ENCODE measurements at regions of chr4 and their contacts with region 1.

Region 1: DNA sequence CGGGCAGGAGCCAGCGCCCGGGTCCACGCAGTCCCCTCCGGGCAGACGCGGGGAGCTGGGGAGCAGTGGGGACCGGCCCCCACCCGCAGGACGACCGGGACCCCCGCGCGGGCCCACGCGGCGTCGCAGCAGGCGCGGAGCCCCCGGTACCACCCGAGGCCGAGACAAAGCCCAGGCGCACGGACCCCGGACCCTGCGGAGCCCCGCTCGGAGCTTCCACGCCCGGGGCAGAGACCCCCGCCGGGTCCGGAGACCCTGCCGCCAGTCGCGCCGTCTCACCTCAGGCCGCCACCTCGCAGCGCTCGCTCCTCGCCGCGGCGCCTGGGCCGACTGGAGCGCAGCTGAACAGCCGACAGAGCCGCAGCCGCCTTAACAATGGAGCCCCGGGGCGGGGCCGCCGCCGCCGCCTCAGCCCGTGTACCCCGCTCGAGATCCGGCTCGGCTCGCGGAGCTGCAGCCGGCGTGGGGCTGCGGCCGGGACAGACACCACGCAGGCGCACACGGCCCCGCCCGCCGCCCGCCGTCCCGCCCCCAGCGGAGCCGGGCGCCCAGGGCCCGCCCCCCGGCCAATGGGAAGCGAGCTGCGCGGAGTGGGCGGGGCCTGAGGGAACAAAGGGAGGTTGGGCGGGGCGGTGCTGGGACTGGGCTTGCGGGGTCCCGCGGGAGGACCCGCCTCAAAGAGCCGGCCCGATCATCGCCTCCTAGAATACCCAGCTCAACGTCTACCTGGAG is at the start of gene AFAP1:
- DNase-seq: peak; percentile 86
- ATAC-seq: peak; percentile 97
- H3K4me3 Mint-ChIP-seq: peak within 1 kb of the TSS; percentile 63
- H3K27ac Mint-ChIP-seq: no peak within 1 kb of the TSS
- H3K4me1 Mint-ChIP-seq: peaks cover 20% of the 10 kb centered on the region
- H3K27me3 Mint-ChIP-seq: peaks cover 27% of the 10 kb centered on the region
- total RNA-seq, gene AFAP1: 5.3 to 6.2 TPM

Region 2: GRCh38 chr4:7792616-7793015 is 146.9 kb before region 1 on chr4:
- CTCF ChIA-PET with region 1: no interaction called
- POLR2A ChIA-PET with region 1: no interaction called
- DNase-seq: no peak
- ATAC-seq: no peak
- H3K4me3 Mint-ChIP-seq: no peak overlapping the region
- H3K27ac Mint-ChIP-seq: no peak overlapping the region
- H3K4me1 Mint-ChIP-seq: no peaks in the 10 kb centered on the region
- H3K27me3 Mint-ChIP-seq: no peaks in the 10 kb centered on the region

Region 3: GRCh38 chr4:7929118-7929951 is 10.2 kb before region 1 on chr4:
- CTCF ChIA-PET with region 1: interaction called, 12 read pairs
- POLR2A ChIA-PET with region 1: interaction called, 3 read pairs
- DNase-seq: no peak
- ATAC-seq: no peak
- H3K4me3 Mint-ChIP-seq: no peak overlapping the region
- H3K27ac Mint-ChIP-seq: no peak overlapping the region
- H3K4me1 Mint-ChIP-seq: no peaks in the 10 kb centered on the region
- H3K27me3 Mint-ChIP-seq: no peaks in the 10 kb centered on the region

Region 4: DNA sequence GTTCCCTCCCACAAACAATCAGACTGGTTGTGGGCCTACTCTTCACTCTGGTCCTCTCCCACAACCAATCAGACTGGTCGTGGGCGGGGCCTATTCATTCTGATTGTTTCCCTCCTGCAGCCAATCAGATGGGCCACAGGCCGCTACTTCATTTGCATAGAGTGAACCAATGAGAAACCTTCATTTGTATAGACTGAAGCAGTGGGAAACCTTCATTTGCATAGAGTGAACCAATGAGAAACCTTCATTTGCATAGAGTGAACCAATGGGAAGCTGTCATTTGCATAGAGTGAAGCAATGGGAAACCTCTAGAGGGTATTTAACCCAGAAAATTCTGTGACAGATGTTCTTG is 556.3 kb after region 1 on chr4:
- CTCF ChIA-PET with region 1: no interaction called
- POLR2A ChIA-PET with region 1: no interaction called
- DNase-seq: no peak
- ATAC-seq: no peak
- H3K4me3 Mint-ChIP-seq: no peak overlapping the region
- H3K27ac Mint-ChIP-seq: no peak overlapping the region
- H3K4me1 Mint-ChIP-seq: no peaks in the 10 kb centered on the region
- H3K27me3 Mint-ChIP-seq: no peaks in the 10 kb centered on the region